ENCODE measurements at regions of chr1 and their contacts with region 1.

Region 1: DNA sequence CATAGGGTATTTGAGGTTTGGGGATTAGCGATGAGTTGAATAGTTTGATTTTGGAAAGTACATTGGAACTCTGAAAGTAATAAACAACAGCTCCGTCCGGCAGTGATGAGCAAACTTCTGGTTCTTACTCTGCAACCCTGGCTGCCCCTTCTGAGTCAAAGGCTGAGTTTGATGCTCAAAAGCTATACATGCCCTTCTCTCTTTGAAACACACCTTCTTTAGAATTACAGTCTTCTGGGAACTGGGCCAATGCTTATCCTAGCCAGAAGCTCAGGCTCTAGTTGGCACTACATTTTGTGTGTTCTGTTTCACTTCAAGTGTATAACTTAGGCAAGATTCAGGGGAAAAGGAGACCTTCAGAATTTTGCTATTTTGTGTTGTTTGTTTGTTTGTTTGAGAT is 9.3 kb downstream of the AHCYL1 start:
- DNase-seq: no peak
- ATAC-seq: no peak
- H3K4me3 Mint-ChIP-seq: no peak overlapping the region
- H3K27ac Mint-ChIP-seq: no peak overlapping the region
- H3K4me1 Mint-ChIP-seq: peaks cover 7% of the 10 kb centered on the region
- H3K27me3 Mint-ChIP-seq: no peaks in the 10 kb centered on the region

Region 2: DNA sequence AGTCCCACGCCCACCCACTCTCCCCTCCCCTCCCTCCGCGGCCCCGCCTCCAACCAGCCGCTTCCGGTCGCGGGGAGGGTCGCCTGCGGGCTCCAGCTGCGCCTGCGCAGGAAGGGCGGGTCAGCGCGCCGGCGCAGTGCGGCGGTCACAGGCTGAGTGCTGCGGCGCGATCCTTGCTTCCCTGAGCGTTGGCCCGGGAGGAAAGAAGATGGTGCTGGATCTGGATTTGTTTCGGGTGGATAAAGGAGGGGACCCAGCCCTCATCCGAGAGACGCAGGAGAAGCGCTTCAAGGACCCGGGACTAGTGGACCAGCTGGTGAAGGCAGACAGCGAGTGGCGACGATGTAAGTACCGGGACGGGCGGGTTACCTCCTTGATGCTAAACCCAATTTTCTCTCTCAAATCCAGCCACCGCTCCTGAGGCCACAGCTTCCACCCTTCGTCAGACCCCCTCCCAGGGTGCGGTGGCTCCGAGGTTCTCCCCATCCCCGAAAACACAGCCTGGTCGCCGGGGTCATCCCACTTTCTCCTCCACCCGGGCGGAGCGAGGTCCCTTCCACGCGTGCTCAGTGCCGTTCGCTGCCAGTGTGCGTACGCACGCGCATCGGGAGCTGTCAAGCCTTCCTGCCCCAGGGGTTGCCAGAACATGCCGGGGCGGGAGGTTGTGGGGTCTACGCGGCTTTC is 780.0 kb before region 1 on chr1 and contains the start of gene SARS1:
- CTCF ChIA-PET with region 1: no interaction called
- POLR2A ChIA-PET with region 1: no interaction called
- DNase-seq: peak; percentile 89
- ATAC-seq: peak; percentile 91
- H3K4me3 Mint-ChIP-seq: peak within 1 kb of the TSS; percentile 99
- H3K27ac Mint-ChIP-seq: peak within 1 kb of the TSS; percentile 85
- H3K4me1 Mint-ChIP-seq: peaks cover 33% of the 10 kb centered on the region
- H3K27me3 Mint-ChIP-seq: peaks cover 3% of the 10 kb centered on the region
- total RNA-seq, gene SARS1: 145 to 157 TPM

Region 3: GRCh38 chr1:110011527-110012041 is 17.7 kb after region 1 on chr1:
- CTCF ChIA-PET with region 1: interaction called, 121 read pairs
- POLR2A ChIA-PET with region 1: interaction called, 3 read pairs
- DNase-seq: peak; percentile 58
- ATAC-seq: peak; percentile 95
- H3K4me3 Mint-ChIP-seq: no peak overlapping the region
- H3K27ac Mint-ChIP-seq: peak overlapping the region; percentile 19
- H3K4me1 Mint-ChIP-seq: peaks cover 3% of the 10 kb centered on the region
- H3K27me3 Mint-ChIP-seq: no peaks in the 10 kb centered on the region